ENCODE measurements at regions of chr2 and their contacts with region 1.

Region 1: GRCh38 chr2:11124503-11125068 is 30.7 kb upstream of the SLC66A3 start:
- DNase-seq: peak; percentile 47
- H3K4me3 ChIP-seq: no peak overlapping the region
- H3K27ac ChIP-seq: no peak overlapping the region
- H3K4me1 ChIP-seq: no peaks in the 10 kb centered on the region
- H3K27me3 ChIP-seq: no peaks in the 10 kb centered on the region
- CTCF ChIP-seq: peak; percentile 51 to 83 (median 76)
- POLR2A ChIP-seq: no peak

Region 2: DNA sequence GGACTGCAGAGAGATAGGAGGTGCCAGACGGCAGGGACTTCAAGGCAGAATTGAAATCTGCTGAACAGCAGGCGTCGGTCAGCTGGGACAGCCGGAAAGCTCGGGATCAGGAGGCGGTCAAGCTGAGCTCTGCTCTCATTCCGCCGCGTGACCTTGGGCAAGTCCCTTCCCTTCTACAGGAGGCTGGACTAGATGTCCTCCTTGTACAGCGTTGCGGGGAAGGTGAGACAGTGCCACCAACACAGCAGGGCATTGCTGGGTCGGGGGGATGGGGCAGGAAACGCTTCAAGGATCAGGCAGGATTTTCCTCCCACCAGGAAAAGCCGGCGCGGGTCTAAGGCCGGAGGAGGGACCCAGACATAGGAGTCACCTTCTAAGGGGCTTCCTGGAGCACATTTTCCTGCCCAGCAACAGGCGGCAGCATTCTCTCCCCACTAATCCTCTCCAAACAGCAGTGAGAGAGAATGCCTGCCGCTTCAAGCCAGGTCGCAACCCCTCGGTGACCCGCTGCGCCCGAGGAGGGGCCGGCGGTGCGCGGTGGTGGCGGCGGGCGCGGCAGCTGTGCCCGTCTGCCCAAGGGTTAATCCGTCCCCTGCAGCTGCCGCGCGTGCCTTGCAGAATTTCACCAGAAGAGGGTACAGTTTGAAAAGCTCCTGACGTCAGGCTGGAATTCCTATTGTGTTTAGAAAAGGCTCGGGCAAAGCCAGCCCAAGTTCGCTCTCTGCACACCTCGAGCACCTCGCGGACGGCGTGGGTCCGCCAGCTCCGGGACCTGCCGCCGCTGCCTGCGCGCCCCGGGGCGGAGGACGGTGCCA is 213.1 kb before region 1 on chr2 and contains the start of gene KCNF1:
- intact Hi-C with region 1: loop called (anchors 5 kb)
- DNase-seq: no peak
- H3K4me3 ChIP-seq: peak within 1 kb of the TSS; percentile 19 to 25
- H3K27ac ChIP-seq: no peak within 1 kb of the TSS
- H3K4me1 ChIP-seq: no peaks in the 10 kb centered on the region
- H3K27me3 ChIP-seq: peaks cover 4% of the 10 kb centered on the region
- CTCF ChIP-seq: peak in 1 of 4 experiments; percentile 25
- POLR2A ChIP-seq: no peak
- total RNA-seq, gene KCNF1: 1.0 TPM in 1 of 2 donors, not detected in the other

Region 3: DNA sequence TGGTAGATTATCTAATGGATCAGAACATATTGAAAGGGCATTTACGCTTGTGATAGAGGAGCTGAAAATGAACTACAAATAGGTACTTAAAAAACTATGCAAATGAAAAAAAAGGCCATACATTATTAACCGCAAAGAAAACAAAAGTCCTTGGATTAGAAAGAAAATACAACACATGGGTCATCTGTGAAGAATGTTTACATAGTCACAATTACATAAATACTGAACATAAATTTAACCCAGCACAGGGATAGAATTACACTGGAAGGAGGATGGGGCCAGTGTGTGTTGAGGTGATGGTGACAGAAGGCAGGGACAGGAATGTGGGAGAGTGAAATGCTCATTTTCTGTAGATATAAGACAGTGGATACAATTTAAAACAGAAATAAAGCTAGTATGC is 538.8 kb after region 1 on chr2:
- intact Hi-C with region 1: no loop called
- DNase-seq: no peak
- H3K4me3 ChIP-seq: no peak overlapping the region
- H3K27ac ChIP-seq: no peak overlapping the region
- H3K4me1 ChIP-seq: no peaks in the 10 kb centered on the region
- H3K27me3 ChIP-seq: no peaks in the 10 kb centered on the region
- CTCF ChIP-seq: no peak
- POLR2A ChIP-seq: no peak

Measured in prostate gland (tissue), 2 donors.